AG04450 (cell line): ENCODE measurements at regions of chr6 and their contacts with region 1.

Region 1: DNA sequence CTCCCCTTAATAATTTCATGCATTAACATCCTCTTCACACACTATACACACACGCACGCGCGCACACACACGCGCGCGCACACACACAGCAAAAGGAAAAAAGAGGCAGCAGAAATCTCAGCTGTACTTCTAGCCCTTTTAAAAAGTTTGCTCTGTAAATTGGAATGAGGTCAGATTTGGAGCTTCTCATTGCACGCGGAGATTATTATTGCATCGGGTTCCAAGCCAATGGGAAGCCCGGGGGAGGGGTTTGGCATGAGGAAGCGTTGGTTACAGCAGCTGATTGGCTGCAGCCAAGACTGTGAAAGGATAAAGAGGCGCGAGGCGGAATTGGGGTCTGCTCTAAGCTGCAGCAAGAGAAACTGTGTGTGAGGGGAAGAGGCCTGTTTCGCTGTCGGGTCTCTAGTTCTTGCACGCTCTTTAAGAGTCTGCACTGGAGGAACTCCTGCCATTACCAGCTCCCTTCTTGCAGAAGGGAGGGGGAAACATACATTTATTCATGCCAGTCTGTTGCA is at the start of gene SOX4:
- DNase-seq: peak; percentile 98
- H3K4me3 ChIP-seq: peak within 1 kb of the TSS; percentile 95
- H3K27ac ChIP-seq: peak within 1 kb of the TSS; percentile 85
- H3K27me3 ChIP-seq: no peaks in the 10 kb centered on the region
- CTCF ChIP-seq: no peak
- polyA plus RNA-seq, gene SOX4: 29.1 and 33.5 TPM in 2 replicates

Region 2: DNA sequence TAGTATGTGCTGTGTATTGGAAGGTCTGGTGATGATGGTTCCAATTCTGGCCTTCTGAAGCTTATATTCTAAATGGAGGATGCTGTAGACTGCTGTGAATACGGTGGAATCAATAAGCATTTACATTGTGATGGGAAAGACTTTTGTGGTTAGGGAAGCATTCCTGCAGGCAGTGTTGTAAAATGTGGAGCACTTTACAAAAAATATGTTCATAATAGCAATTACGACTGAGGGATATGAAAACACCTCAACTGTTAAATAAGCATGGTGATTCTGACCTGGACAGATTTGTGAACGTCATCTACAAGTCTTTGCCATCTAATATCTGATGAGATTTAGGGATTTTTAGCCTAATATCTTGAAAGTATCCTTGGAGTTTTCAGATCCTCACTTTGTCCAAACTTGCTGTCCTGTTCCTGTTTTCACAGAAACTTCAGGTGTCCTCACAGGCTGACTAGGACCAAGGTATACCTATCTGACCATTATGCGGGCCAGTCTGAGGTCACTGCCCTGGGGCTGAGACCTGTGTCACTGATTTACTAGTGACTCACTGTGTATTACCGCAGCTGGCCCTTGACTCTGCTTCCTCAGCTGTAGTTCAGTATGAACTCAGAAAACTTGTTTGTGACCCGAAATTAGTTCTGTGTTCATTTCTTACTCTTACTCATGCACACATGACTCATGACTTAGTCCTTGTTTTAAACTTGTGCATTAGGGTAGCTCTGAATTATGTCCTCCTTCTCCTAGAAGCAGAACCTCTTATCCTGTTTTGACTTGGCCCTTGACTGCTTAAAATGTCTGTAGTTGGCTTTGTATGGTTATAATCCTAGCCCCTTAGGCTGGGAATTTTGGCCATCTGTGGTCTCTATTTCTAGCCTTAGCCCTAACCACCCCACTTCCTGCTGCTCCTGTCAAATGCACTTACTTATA is 716.2 kb before region 1 on chr6:
- CTCF ChIA-PET with region 1: interaction called, 28 read pairs
- POLR2A ChIA-PET with region 1: interaction called, 14 read pairs
- DNase-seq: peak; percentile 76
- H3K4me3 ChIP-seq: no peak overlapping the region
- H3K27ac ChIP-seq: peak overlapping the region; percentile 86
- H3K27me3 ChIP-seq: no peaks in the 10 kb centered on the region
- CTCF ChIP-seq: no peak

Region 3: DNA sequence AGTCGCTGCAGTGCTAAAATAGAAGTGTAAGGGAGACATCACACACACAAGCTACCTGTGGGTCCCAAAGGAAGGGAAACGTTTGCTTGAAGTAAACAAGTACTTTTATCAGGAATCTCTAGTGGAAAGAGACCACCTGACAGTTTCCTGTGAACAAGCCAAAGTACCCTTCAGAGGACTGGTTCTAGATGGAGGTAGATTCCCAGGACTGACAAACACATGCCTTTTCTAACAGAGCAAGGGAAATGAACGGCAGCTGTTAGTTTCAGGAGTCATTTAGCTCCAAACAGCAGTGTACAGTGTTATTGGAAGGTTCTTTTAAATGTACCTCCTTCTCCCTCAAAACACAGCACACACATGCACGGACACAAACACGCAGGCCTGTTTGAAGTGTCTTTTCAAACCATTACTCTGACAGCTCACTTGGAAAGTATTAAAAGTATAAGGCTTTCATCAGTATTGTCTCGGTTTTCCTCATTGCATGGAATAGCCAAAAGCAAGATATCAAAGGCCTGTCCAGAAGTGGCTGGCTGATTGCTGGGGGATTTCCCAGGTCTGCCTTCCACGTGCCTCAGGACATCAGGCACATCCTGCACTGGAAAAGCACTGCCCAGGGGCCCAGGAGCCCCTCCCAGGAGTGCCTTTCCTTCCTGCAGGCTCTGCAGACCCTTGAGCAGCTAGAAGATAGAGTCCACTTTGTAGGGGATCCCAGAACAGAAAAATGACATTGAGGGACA is 393.2 kb before region 1 on chr6:
- CTCF ChIA-PET with region 1: interaction called, 12 read pairs
- POLR2A ChIA-PET with region 1: no interaction called
- DNase-seq: no peak
- H3K4me3 ChIP-seq: no peak overlapping the region
- H3K27ac ChIP-seq: no peak overlapping the region
- H3K27me3 ChIP-seq: no peaks in the 10 kb centered on the region
- CTCF ChIP-seq: no peak

Region 4: DNA sequence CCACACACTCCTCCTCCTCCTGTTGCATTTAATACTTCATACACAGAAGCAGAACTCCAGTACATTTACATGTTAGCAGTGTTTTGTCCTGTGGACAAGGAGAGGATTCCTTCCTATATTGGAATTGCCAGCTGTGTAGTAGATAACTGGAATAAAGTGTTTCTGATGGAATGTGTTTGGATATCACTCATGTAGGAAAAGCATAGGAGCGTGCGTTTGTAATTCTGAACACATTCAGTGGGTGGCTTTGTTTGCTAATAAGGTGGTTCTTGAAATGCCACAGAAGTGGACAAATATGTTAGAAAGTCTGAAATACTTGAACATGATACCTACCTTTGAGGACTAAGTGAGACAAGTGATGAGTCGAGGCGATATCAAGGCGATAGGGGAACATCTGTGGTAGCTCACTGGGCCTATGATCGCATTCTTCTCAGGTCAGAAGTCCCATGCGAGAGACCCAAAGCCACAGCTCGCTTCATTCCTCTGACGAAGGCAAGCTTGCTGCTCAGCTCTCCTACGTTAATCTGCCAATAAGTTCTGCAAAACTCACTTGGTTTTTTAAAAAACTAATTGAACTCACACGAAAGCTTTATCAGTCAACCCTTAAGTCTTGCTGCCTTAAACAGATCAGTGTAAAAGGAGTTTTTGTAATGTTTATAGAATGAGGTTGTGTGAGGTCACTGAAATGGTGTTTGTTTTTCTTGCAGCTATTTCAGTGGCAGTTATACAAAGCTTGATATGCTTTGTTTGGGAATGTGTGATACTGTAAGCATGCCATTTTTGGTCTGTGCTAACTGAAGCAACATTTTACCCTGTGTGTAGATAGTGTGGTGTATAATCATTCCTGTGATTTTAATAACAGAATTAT is 160.0 kb after region 1 on chr6:
- CTCF ChIA-PET with region 1: interaction called, 9 read pairs
- POLR2A ChIA-PET with region 1: interaction called, 16 read pairs
- DNase-seq: peak; percentile 82
- H3K4me3 ChIP-seq: no peak overlapping the region; the same call in 1 of the 2 replicates
- H3K27ac ChIP-seq: peak overlapping the region; percentile 69
- H3K27me3 ChIP-seq: no peaks in the 10 kb centered on the region
- CTCF ChIP-seq: no peak

Region 5: DNA sequence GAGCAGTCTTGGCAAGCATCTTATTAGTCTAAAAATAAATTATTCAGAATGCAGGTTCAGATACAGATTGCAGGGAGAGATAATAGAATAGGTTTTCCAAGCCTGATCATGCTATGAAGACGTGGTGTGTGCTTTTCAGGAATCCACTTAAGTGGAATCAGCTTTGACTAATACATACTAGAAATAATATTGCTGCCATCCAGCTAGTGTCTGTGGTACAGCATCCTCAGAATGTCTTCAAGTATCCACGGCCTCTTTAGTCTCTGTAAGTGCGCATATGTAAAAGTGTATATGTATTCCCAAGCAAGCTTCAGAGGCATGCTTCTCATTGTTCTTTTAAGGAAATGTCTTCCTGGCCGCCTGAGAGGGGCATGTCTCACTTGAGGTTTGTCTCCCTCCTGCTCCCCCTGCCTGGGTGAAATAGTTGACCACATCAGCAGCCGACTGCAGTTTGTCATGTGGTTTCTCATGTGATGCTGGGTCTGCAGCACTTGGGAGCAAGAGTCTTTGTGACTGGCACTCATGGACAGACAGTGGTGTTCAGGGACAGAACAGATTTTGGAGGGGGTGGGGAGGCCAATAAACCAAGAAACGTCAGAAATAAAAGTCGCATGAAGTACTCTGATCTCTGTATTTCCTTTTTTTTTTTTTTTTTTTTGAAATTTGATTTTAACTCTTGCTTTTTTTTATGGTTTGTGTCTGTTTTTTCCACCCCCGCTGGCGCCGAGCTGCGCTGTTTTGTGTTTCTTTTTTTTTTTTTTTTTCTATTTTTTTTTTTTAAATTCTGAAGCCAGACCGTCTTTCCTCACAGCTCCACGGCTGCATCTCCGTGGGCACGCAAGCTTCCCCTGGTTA is 552.6 kb after region 1 on chr6:
- CTCF ChIA-PET with region 1: interaction called, 6 read pairs
- POLR2A ChIA-PET with region 1: interaction called, 61 read pairs
- DNase-seq: peak; percentile 42
- H3K4me3 ChIP-seq: no peak overlapping the region
- H3K27ac ChIP-seq: no peak overlapping the region
- H3K27me3 ChIP-seq: no peaks in the 10 kb centered on the region
- CTCF ChIP-seq: peak; percentile 50

Region 6: GRCh38 chr6:22442826-22443225 is 849.4 kb after region 1 on chr6:
- CTCF ChIA-PET with region 1: no interaction called
- POLR2A ChIA-PET with region 1: no interaction called
- DNase-seq: no peak
- H3K4me3 ChIP-seq: no peak overlapping the region
- H3K27ac ChIP-seq: no peak overlapping the region
- H3K27me3 ChIP-seq: no peaks in the 10 kb centered on the region
- CTCF ChIP-seq: no peak

Region 7: DNA sequence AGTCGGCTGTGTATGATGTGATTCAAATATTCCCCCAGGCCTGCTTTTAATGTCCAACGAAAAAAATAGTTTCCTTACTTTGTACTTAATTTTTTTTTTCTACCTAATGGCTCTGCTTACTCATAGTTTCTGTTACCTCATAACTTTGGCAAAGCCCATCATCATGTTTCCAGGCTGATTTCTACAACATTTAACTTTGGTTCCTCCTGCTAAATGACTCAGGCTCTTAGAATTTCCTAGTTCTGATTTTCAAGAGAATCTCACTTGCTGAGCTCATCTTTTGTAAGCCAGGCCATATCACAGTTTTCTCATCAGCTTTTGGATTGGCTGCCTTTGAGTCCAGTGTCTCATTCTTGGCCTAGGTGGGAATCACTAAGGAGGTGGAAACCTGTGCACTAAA is 1299.0 kb after region 1 on chr6:
- CTCF ChIA-PET with region 1: no interaction called
- POLR2A ChIA-PET with region 1: interaction called, 10 read pairs
- DNase-seq: peak; percentile 89
- H3K4me3 ChIP-seq: no peak overlapping the region
- H3K27ac ChIP-seq: peak overlapping the region; percentile 77
- H3K27me3 ChIP-seq: no peaks in the 10 kb centered on the region
- CTCF ChIP-seq: no peak